ENCODE measurements at regions of chr12 and their contacts with region 1.

Region 1: GRCh38 chr12:14995583-14996425 is 23.0 kb downstream of the PDE6H start:
- DNase-seq: no peak
- CTCF ChIP-seq: peak; percentile 57

Region 2: GRCh38 chr12:14216405-14217294 is 779.2 kb before region 1 on chr12:
- in situ Hi-C with region 1: loop called (anchors 25 kb)
- DNase-seq: no peak
- CTCF ChIP-seq: no peak

Region 3: DNA sequence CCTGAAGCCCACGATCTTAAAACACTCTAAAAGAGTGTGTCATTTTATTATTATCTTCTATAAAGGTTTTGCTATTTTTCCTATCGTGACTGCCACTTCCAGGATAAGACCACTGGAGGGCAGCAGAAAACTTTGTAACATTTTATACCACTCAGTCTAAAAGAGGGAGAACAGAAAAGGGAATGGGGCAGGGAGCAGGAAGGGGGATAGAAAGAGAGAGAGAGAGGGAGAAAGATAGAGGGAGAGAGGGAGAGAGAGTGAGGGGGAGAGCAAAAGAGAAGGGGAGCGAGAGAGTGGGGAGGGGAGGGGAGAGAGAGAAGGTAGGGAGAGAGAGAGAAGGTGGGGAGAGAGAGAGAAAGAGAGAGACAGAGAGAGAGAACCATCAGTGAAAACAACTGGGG is 150.5 kb before region 1 on chr12:
- in situ Hi-C with region 1: loop called (anchors 5 kb)
- DNase-seq: peak; percentile 58
- CTCF ChIP-seq: peak; percentile 79